ENCODE measurements at regions of chr1 and their contacts with region 1.

Region 1: GRCh38 chr1:51192213-51192843 is 43.7 kb upstream of the RNF11 start:
- DNase-seq: peak; percentile 79
- ATAC-seq: peak; percentile 33
- H3K4me3 Mint-ChIP-seq: no peak overlapping the region
- H3K27ac Mint-ChIP-seq: no peak overlapping the region
- H3K4me1 Mint-ChIP-seq: no peaks in the 10 kb centered on the region
- H3K27me3 Mint-ChIP-seq: no peaks in the 10 kb centered on the region

Region 2: DNA sequence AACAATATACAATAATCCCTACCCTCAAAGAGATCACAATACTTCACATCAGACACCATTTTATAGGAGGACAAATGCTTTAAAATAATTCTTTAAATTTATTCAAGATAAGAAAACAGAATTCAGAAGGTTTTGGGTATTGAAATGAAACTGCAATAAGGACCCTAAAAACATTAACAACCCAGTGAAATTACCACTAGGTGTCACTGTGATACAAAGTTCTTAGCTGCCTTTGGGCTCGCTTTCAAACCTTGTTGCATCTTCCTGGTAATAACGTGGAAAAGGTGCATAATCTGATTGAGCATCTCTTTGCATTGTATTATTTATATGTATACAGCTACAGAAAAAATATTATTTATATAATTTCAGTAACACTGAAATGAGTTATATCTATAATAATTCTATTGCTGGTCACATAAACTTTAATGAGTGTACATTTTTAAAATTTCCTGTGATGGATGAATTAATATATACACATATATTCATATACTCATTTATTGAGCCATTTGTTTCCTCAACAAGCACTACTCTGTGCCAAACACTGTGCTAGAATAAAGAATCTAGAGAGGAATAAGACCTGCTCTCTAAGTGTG is 417.5 kb before region 1 on chr1:
- CTCF ChIA-PET with region 1: interaction called, 121 read pairs
- POLR2A ChIA-PET with region 1: no interaction called
- intact Hi-C with region 1: loop called (anchors 1 kb)
- DNase-seq: peak; percentile 6
- ATAC-seq: no peak
- H3K4me3 Mint-ChIP-seq: no peak overlapping the region
- H3K27ac Mint-ChIP-seq: no peak overlapping the region
- H3K4me1 Mint-ChIP-seq: peaks cover 3% of the 10 kb centered on the region
- H3K27me3 Mint-ChIP-seq: no peaks in the 10 kb centered on the region

Region 3: GRCh38 chr1:50893466-50893865 is 298.9 kb before region 1 on chr1:
- CTCF ChIA-PET with region 1: no interaction called
- POLR2A ChIA-PET with region 1: no interaction called
- intact Hi-C with region 1: no loop called
- DNase-seq: no peak
- ATAC-seq: no peak
- H3K4me3 Mint-ChIP-seq: no peak overlapping the region
- H3K27ac Mint-ChIP-seq: no peak overlapping the region
- H3K4me1 Mint-ChIP-seq: peaks cover 15% of the 10 kb centered on the region
- H3K27me3 Mint-ChIP-seq: no peaks in the 10 kb centered on the region

Region 4: DNA sequence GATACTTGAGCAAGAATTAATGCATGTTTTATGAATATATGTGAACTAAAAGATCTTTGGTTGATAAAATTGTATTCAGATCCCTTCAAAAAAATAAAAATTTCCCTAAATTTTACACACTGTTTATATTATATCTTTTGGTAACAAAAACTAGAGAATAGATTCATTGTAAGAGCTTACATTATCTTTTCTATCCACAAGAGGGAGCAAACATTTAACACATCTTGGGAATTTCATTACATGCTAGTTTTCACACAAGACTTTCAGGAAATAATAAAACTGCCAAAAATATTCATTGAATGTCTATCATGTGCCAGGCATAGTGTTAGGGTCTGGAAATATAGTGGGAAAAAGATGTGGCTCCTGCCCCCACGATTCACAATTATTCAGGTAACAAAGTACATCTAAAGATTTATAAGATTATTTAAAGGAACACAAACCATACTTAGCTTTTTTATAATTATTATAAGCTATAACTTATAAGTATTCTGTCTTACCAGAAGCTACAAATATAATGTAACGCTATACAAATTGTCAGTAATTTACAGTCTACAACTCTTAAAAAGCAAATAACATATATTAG is 262.9 kb before region 1 on chr1:
- CTCF ChIA-PET with region 1: interaction called, 23 read pairs
- POLR2A ChIA-PET with region 1: no interaction called
- intact Hi-C with region 1: loop called (anchors 1 to 2 kb)
- DNase-seq: no peak
- ATAC-seq: no peak
- H3K4me3 Mint-ChIP-seq: no peak overlapping the region
- H3K27ac Mint-ChIP-seq: no peak overlapping the region
- H3K4me1 Mint-ChIP-seq: peaks cover 37% of the 10 kb centered on the region
- H3K27me3 Mint-ChIP-seq: no peaks in the 10 kb centered on the region

Region 5: DNA sequence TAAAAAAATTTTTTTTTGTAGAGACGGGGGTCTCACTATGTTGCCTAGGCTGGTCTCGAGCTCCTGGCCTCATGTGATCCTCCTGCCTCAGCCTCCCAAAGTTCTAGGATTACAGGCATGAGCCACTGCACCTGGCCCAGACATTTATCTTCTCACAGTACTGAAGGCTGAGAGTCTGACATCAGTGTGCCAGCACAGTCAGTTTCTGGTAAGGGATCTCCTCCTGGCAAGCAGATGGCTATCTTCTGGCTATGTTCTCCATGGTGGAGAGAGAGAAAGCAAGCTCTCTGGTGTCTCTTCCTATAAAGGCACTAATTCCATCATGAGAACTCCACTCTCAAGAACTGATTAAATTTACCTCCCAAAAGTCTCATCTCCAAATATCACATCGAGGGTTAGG is 148.1 kb before region 1 on chr1:
- CTCF ChIA-PET with region 1: no interaction called
- POLR2A ChIA-PET with region 1: no interaction called
- intact Hi-C with region 1: no loop called
- DNase-seq: no peak
- ATAC-seq: no peak
- H3K4me3 Mint-ChIP-seq: no peak overlapping the region
- H3K27ac Mint-ChIP-seq: no peak overlapping the region
- H3K4me1 Mint-ChIP-seq: no peaks in the 10 kb centered on the region
- H3K27me3 Mint-ChIP-seq: peaks cover 12% of the 10 kb centered on the region

Region 6: GRCh38 chr1:51093581-51093980 is 98.7 kb before region 1 on chr1:
- CTCF ChIA-PET with region 1: interaction called, 4 read pairs
- POLR2A ChIA-PET with region 1: no interaction called
- intact Hi-C with region 1: loop called in 1 of 2 experiments (anchors 5 kb)
- DNase-seq: no peak
- ATAC-seq: no peak
- H3K4me3 Mint-ChIP-seq: no peak overlapping the region
- H3K27ac Mint-ChIP-seq: no peak overlapping the region
- H3K4me1 Mint-ChIP-seq: no peaks in the 10 kb centered on the region
- H3K27me3 Mint-ChIP-seq: peaks cover 34% of the 10 kb centered on the region

Region 7: DNA sequence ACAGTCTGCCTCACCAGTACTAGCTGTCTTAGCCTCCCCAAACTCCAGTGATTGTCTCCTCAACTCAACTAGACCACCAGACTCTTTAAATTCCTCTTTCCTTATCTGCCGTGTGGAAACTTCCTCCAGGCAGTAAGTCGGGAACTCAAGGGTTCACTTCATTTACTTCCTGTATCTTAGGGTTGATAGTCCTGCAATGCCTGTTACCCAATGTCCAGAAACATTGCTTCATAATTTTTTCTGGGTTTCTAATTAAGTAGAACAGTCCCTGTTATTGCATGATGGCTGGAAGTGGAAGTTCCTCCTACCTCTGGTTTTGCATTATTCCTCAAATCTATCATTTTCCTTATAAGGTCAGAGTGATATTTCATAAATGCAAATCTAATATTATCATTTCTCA is 17.1 kb before region 1 on chr1:
- CTCF ChIA-PET with region 1: interaction called, 18 read pairs
- POLR2A ChIA-PET with region 1: no interaction called
- intact Hi-C with region 1: no loop called
- DNase-seq: no peak
- ATAC-seq: no peak
- H3K4me3 Mint-ChIP-seq: no peak overlapping the region
- H3K27ac Mint-ChIP-seq: no peak overlapping the region
- H3K4me1 Mint-ChIP-seq: peaks cover 2% of the 10 kb centered on the region
- H3K27me3 Mint-ChIP-seq: peaks cover 25% of the 10 kb centered on the region

Region 8: GRCh38 chr1:51296383-51297357 is 104.3 kb after region 1 on chr1:
- CTCF ChIA-PET with region 1: interaction called, 39 read pairs
- POLR2A ChIA-PET with region 1: no interaction called
- intact Hi-C with region 1: loop called (anchors 2 to 5 kb)
- DNase-seq: peak; percentile 88
- ATAC-seq: peak; percentile 85
- H3K4me3 Mint-ChIP-seq: peak overlapping the region; percentile 61
- H3K27ac Mint-ChIP-seq: peak overlapping the region; percentile 33
- H3K4me1 Mint-ChIP-seq: peaks cover 11% of the 10 kb centered on the region
- H3K27me3 Mint-ChIP-seq: no peaks in the 10 kb centered on the region

Measured in activated CD4-positive, alpha-beta T cell treated with anti-CD3 and anti-CD28 coated beads for 36 hours (primary cell).